IMR-90 (cell line): ENCODE measurements at regions of chr22 and their contacts with region 1.

Region 1: DNA sequence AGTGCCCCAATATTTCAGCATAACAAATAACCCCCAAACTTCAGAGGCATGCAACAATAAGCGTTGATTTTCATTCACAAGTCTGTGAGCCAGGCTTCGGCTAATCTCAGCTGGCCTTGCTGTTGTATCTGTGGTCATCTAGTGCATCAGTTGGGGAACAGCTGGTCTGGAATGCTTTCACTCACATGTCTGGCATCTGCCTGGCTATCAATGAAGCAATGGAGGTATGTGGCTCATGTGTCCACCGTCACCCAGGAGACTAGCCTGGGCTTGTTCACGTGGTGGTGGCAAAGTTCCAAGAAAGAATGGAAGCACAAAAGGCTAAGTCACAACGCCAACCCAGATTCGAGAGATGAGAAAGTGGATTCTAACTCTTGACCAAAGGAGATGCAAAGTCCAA is 304.8 kb upstream of the ISX start:
- DNase-seq: no peak
- ATAC-seq: no peak
- H3K4me3 ChIP-seq: no peak overlapping the region
- H3K27ac ChIP-seq: no peak overlapping the region
- H3K4me1 ChIP-seq: no peaks in the 10 kb centered on the region
- H3K27me3 ChIP-seq: no peaks in the 10 kb centered on the region
- CTCF ChIP-seq: no peak
- POLR2A ChIP-seq: no peak
- RAD21 ChIP-seq: no peak

Region 2: GRCh38 chr22:34738661-34739400 is 22.3 kb before region 1 on chr22:
- CTCF ChIA-PET with region 1: no interaction called
- POLR2A ChIA-PET with region 1: no interaction called
- dilution Hi-C with region 1: no loop called
- in situ Hi-C with region 1: no loop called
- intact Hi-C with region 1: loop called (anchors 1 kb)
- DNase-seq: no peak
- ATAC-seq: no peak
- H3K4me3 ChIP-seq: no peak overlapping the region
- H3K27ac ChIP-seq: no peak overlapping the region
- H3K4me1 ChIP-seq: no peaks in the 10 kb centered on the region
- H3K27me3 ChIP-seq: no peaks in the 10 kb centered on the region
- CTCF ChIP-seq: no peak
- POLR2A ChIP-seq: no peak
- RAD21 ChIP-seq: no peak

Region 3: GRCh38 chr22:34784056-34784455 is 22.9 kb after region 1 on chr22:
- CTCF ChIA-PET with region 1: no interaction called
- POLR2A ChIA-PET with region 1: no interaction called
- dilution Hi-C with region 1: no loop called
- in situ Hi-C with region 1: no loop called
- intact Hi-C with region 1: no loop called
- DNase-seq: no peak
- ATAC-seq: no peak
- H3K4me3 ChIP-seq: no peak overlapping the region
- H3K27ac ChIP-seq: no peak overlapping the region
- H3K4me1 ChIP-seq: no peaks in the 10 kb centered on the region
- H3K27me3 ChIP-seq: no peaks in the 10 kb centered on the region
- CTCF ChIP-seq: no peak
- POLR2A ChIP-seq: no peak
- RAD21 ChIP-seq: no peak

Region 4: GRCh38 chr22:34814260-34815025 is 53.3 kb after region 1 on chr22:
- CTCF ChIA-PET with region 1: no interaction called
- POLR2A ChIA-PET with region 1: no interaction called
- dilution Hi-C with region 1: no loop called
- in situ Hi-C with region 1: no loop called
- intact Hi-C with region 1: loop called (anchors 2 kb)
- DNase-seq: no peak
- ATAC-seq: no peak
- H3K4me3 ChIP-seq: no peak overlapping the region
- H3K27ac ChIP-seq: no peak overlapping the region
- H3K4me1 ChIP-seq: no peaks in the 10 kb centered on the region
- H3K27me3 ChIP-seq: no peaks in the 10 kb centered on the region
- CTCF ChIP-seq: no peak
- POLR2A ChIP-seq: no peak
- RAD21 ChIP-seq: no peak

Region 5: DNA sequence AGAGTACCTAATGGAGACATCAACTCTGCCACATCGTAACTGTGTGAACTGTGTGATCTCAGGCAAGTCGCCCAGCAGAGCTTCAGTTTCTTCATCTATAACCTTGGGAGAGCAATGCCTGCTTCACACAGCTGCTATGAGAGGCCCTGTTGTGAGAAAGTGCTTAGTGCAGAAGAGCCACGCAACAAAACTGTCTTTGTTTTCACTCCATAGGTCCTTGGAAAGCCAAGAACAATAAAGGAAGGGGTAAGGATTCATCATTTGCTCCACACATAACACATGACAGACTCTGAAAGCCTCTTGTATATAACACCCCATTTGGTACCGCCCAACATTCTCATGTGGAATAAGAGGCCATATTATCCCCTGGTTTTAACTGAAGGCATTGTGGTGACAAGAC is 72.9 kb after region 1 on chr22:
- CTCF ChIA-PET with region 1: no interaction called
- POLR2A ChIA-PET with region 1: no interaction called
- dilution Hi-C with region 1: no loop called
- in situ Hi-C with region 1: no loop called
- intact Hi-C with region 1: no loop called
- DNase-seq: no peak
- ATAC-seq: no peak
- H3K4me3 ChIP-seq: no peak overlapping the region
- H3K27ac ChIP-seq: no peak overlapping the region
- H3K4me1 ChIP-seq: no peaks in the 10 kb centered on the region
- H3K27me3 ChIP-seq: no peaks in the 10 kb centered on the region
- CTCF ChIP-seq: no peak
- POLR2A ChIP-seq: no peak
- RAD21 ChIP-seq: no peak